Activated CD4-positive, alpha-beta T cell treated with anti-CD3 and anti-CD28 coated beads for 36 hours (primary cell): ENCODE measurements at regions of chr16 and their contacts with region 1.

Region 1: DNA sequence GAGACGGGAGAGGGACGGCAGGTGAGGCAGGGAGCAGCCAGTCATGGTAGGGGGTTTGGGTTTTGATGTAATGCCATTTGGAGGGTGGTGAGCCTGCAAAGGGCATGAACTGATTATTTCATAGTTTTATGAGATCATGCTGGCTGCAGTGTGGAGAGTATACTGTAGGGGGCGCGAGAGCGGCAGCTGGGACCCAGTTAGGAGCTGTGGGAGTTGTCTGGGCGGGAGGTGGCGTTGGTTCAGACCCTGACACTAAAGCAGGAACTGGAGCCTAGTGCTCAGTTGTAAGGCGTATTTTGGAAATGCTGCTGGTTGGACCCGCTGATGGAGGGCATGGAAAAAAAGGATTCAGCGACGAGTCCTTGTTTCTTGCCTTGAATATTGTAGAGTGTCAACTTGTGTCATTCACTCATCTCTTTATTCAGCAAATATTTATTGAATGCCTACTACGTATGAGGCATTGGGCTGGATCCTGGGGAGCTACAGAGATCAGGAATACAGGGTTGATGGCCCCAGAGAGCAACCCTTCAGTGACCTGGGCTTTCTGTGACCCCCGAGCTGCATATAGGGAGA is 23.7 kb upstream of the KDM8 start:
- DNase-seq: peak; percentile 95
- ATAC-seq: peak; percentile 91
- H3K4me3 Mint-ChIP-seq: no peak overlapping the region
- H3K27ac Mint-ChIP-seq: peak overlapping the region; percentile 80
- H3K4me1 Mint-ChIP-seq: peaks cover 48% of the 10 kb centered on the region
- H3K27me3 Mint-ChIP-seq: no peaks in the 10 kb centered on the region

Region 2: GRCh38 chr16:26963114-26963513 is 216.5 kb before region 1 on chr16:
- CTCF ChIA-PET with region 1: no interaction called
- POLR2A ChIA-PET with region 1: no interaction called
- intact Hi-C with region 1: no loop called
- DNase-seq: peak; percentile 61
- ATAC-seq: peak; percentile 74
- H3K4me3 Mint-ChIP-seq: no peak overlapping the region
- H3K27ac Mint-ChIP-seq: no peak overlapping the region
- H3K4me1 Mint-ChIP-seq: no peaks in the 10 kb centered on the region
- H3K27me3 Mint-ChIP-seq: peaks cover 9% of the 10 kb centered on the region

Region 3: GRCh38 chr16:27154705-27155521 is 24.7 kb before region 1 on chr16:
- CTCF ChIA-PET with region 1: interaction called, 37 read pairs
- POLR2A ChIA-PET with region 1: no interaction called
- intact Hi-C with region 1: no loop called
- DNase-seq: peak; percentile 86
- ATAC-seq: peak; percentile 87
- H3K4me3 Mint-ChIP-seq: no peak overlapping the region
- H3K27ac Mint-ChIP-seq: no peak overlapping the region
- H3K4me1 Mint-ChIP-seq: peaks cover 9% of the 10 kb centered on the region
- H3K27me3 Mint-ChIP-seq: no peaks in the 10 kb centered on the region

Region 4: DNA sequence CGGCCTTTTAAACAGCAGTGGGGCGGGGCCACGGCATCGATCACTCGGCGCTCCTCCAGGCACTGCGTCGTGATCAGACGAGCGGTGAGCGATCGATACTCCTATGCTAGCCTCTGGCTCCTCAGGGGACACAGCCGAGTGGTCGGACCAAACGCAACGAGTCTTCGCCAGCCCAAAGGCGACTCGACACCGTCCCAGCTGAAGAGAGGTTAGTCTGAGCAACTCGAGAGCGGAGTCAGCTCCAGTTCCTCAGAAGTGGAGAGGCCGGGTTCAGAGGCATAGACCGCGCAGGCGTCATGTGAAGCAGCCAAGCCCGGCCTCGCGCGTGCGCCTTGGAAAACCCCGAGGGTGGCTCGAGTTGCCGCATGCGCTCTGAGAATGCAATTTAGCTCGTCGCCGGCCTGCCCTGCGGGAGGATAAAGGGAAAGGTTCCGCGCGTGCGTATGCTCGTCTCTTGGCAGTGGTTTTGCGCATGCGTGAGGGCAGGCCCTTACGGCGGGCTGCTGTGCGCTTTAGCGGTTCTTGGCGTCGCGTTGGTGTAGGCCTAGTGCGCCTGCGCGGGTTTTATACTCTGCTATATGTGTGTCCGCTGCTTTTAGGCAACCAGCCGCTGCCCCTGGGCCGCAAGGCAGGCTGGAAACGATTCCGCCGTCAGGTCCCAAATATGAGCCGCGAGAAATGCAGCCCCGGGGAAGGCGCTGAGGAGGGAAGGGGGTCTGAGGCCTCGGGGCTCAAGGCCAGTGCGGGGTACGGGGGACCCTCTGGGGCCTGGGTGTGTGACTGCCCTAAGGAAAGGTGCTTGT is 24.0 kb after region 1 on chr16 and contains the start of gene KDM8:
- CTCF ChIA-PET with region 1: interaction called, 19 read pairs
- POLR2A ChIA-PET with region 1: no interaction called
- intact Hi-C with region 1: loop called in 1 of 2 experiments (anchors 1 kb)
- DNase-seq: peak; percentile 100
- ATAC-seq: peak; percentile 90
- H3K4me3 Mint-ChIP-seq: peak within 1 kb of the TSS; percentile 89
- H3K27ac Mint-ChIP-seq: peak within 1 kb of the TSS; percentile 100
- H3K4me1 Mint-ChIP-seq: peaks cover 47% of the 10 kb centered on the region
- H3K27me3 Mint-ChIP-seq: no peaks in the 10 kb centered on the region
- total RNA-seq, gene KDM8: 9.8 to 10.4 TPM

Region 5: DNA sequence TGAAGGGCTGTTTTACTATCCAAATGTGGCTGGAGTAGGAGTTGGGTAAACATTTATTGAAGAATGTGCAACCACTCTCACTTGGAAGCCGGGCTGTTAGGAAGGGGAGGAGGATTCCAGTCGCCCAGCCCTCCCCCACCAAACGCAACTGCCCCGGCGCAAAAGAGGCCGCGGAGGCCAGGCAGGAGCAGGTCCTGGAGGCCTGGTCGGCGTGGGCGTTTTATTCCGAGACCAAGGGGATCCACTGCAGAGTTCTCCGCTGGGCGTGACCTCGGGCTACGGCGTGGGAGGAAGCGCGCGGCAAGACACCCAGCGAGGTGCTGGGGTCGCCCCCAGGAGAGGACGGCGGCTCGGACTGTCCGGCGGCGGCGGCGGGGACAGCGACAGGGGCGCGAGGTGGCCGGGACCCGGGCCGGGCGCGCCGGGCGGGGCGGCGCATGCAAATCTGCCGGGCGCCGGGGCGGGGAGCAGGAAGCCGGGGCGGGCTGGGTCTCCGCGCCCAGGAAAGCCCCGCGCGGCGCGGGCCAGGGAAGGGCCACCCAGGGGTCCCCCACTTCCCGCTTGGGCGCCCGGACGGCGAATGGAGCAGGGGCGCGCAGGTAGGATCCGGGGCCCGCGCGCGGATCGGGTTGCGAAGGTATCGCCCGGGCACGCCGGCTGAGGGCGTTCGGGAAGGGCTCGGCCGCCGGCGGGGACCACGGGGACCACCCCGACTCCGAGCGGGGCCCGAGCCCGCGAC is 134.0 kb after region 1 on chr16 and contains the start of gene IL4R:
- CTCF ChIA-PET with region 1: interaction called, 3 read pairs
- POLR2A ChIA-PET with region 1: no interaction called
- intact Hi-C with region 1: loop called (anchors 2 kb)
- DNase-seq: peak; percentile 87
- ATAC-seq: no peak
- H3K4me3 Mint-ChIP-seq: peak within 1 kb of the TSS; percentile 90
- H3K27ac Mint-ChIP-seq: peak within 1 kb of the TSS; percentile 97
- H3K4me1 Mint-ChIP-seq: peaks cover 44% of the 10 kb centered on the region
- H3K27me3 Mint-ChIP-seq: no peaks in the 10 kb centered on the region
- total RNA-seq, gene IL4R: 185 to 229 TPM

Region 6: GRCh38 chr16:27461483-27462171 is 282.0 kb after region 1 on chr16:
- CTCF ChIA-PET with region 1: interaction called, 3 read pairs
- POLR2A ChIA-PET with region 1: no interaction called
- intact Hi-C with region 1: loop called (anchors 1 kb)
- DNase-seq: no peak
- ATAC-seq: no peak
- H3K4me3 Mint-ChIP-seq: no peak overlapping the region
- H3K27ac Mint-ChIP-seq: no peak overlapping the region
- H3K4me1 Mint-ChIP-seq: peaks cover 21% of the 10 kb centered on the region
- H3K27me3 Mint-ChIP-seq: no peaks in the 10 kb centered on the region

Region 7: DNA sequence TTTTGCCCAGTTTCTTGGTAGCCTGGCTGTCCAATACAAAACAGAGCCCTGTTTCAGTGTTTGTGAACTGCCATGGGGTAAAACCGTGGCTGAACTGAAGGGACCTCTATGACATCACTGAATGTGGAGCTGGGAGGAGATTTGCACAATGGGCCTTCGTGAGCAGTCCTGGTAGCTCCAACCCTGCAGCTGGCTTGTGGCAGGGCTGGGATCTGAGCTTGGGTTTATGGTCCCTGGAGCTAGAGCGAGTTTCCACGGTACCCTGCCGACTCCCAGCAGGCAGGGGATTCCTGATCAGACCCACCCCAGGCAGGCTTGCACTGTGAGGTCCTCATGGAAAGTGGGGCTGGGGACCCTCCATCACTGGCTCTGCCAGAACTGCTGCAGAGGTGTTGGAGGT is 637.0 kb after region 1 on chr16:
- CTCF ChIA-PET with region 1: no interaction called
- POLR2A ChIA-PET with region 1: no interaction called
- intact Hi-C with region 1: no loop called
- DNase-seq: no peak
- ATAC-seq: no peak
- H3K4me3 Mint-ChIP-seq: no peak overlapping the region
- H3K27ac Mint-ChIP-seq: no peak overlapping the region
- H3K4me1 Mint-ChIP-seq: no peaks in the 10 kb centered on the region
- H3K27me3 Mint-ChIP-seq: peaks cover 4% of the 10 kb centered on the region